Activated CD4-positive, alpha-beta memory T cell treated with anti-CD3 and anti-CD28 coated beads for 36 hours (primary cell): ENCODE measurements at regions of chr16 and their contacts with region 1.

Region 1: GRCh38 chr16:70428178-70428998 is 10.5 kb downstream of the ST3GAL2 start:
- DNase-seq: peak; percentile 88
- H3K4me3 Mint-ChIP-seq: peak overlapping the region; percentile 13
- H3K27ac Mint-ChIP-seq: peak overlapping the region; percentile 75
- H3K4me1 Mint-ChIP-seq: peaks cover 57% of the 10 kb centered on the region
- H3K27me3 Mint-ChIP-seq: no peaks in the 10 kb centered on the region

Region 2: DNA sequence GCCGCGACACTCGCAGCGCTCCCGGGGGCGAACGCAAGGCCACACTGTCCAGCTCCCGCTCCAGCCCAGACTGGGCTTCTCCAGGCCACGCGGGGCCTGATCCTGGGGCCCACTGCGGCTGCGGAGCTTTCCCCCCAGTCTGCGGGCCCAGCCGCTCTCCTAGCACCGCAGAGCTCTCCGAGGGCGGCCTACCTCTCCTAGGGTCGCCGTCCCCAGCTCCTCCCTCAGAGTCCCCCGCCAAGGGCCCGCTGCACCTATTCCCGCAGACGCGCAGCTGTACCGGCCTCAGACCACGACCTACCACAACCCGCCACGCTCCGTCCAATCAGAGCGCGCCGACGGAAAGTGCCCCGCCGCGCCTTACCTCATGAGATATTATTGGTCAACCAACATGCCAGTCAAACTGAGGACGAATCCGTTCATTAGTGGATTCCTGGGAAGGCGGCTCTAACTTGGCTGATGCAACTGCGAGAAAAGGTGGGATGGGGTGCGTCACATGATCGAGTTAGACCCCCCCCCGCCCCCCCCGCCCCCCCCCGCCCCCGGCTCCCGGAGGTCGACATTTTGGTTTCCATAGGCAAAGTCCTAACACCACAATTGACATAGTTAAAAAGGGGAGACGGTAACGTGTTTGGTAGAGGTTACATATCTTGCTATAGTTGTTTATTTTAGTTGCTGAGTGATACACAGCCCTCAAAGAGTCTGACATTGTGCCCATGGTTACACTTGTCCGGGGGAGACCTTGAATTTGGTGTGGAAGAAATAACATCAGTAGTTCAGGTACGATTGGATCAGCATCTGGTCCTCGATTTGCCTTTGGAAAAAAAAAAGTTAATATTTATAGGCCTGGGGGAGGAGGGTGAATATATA is 138.9 kb before region 1 on chr16 and contains the start of gene AARS1:
- CTCF ChIA-PET with region 1: no interaction called
- POLR2A ChIA-PET with region 1: no interaction called
- intact Hi-C with region 1: no loop called
- DNase-seq: peak; percentile 97
- H3K4me3 Mint-ChIP-seq: peak within 1 kb of the TSS; percentile 98
- H3K27ac Mint-ChIP-seq: peak within 1 kb of the TSS; percentile 98
- H3K4me1 Mint-ChIP-seq: peaks cover 31% of the 10 kb centered on the region
- H3K27me3 Mint-ChIP-seq: peaks cover 2% of the 10 kb centered on the region
- total RNA-seq, gene AARS1: 165 to 170 TPM

Region 3: GRCh38 chr16:70320121-70320520 is 108.3 kb before region 1 on chr16:
- CTCF ChIA-PET with region 1: no interaction called
- POLR2A ChIA-PET with region 1: no interaction called
- intact Hi-C with region 1: no loop called
- DNase-seq: no peak
- H3K4me3 Mint-ChIP-seq: no peak overlapping the region
- H3K27ac Mint-ChIP-seq: no peak overlapping the region
- H3K4me1 Mint-ChIP-seq: no peaks in the 10 kb centered on the region
- H3K27me3 Mint-ChIP-seq: no peaks in the 10 kb centered on the region

Region 4: GRCh38 chr16:70402916-70403659 is 25.3 kb before region 1 on chr16:
- CTCF ChIA-PET with region 1: no interaction called
- POLR2A ChIA-PET with region 1: no interaction called
- intact Hi-C with region 1: loop called (anchors 1 kb)
- DNase-seq: no peak
- H3K4me3 Mint-ChIP-seq: no peak overlapping the region
- H3K27ac Mint-ChIP-seq: peak overlapping the region; percentile 2
- H3K4me1 Mint-ChIP-seq: peaks cover 39% of the 10 kb centered on the region
- H3K27me3 Mint-ChIP-seq: no peaks in the 10 kb centered on the region

Region 5: GRCh38 chr16:70454222-70455034 is 26.0 kb after region 1 on chr16 and contains the start of gene FCSK:
- CTCF ChIA-PET with region 1: no interaction called
- POLR2A ChIA-PET with region 1: no interaction called
- intact Hi-C with region 1: loop called (anchors 1 kb)
- DNase-seq: peak; percentile 69
- H3K4me3 Mint-ChIP-seq: peak within 1 kb of the TSS; percentile 85
- H3K27ac Mint-ChIP-seq: peak within 1 kb of the TSS; percentile 67
- H3K4me1 Mint-ChIP-seq: peaks cover 12% of the 10 kb centered on the region
- H3K27me3 Mint-ChIP-seq: no peaks in the 10 kb centered on the region
- total RNA-seq, gene FCSK: 13.1 to 14.0 TPM